Activated CD8-positive, alpha-beta T cell treated with anti-CD3 and anti-CD28 coated beads, Interleukin-2, amount 10 ng/mL, durations not matched to agents 7 days and 5 days (primary cell): ENCODE measurements at regions of chr9 and their contacts with region 1.

Region 1: GRCh38 chr9:99140685-99141314 is 35.9 kb downstream of the TGFBR1 start:
- DNase-seq: peak; percentile 56
- ATAC-seq: peak; percentile 65
- H3K4me3 Mint-ChIP-seq: no peak overlapping the region
- H3K27ac Mint-ChIP-seq: peak overlapping the region; percentile 66
- H3K4me1 Mint-ChIP-seq: peaks cover 50% of the 10 kb centered on the region
- H3K27me3 Mint-ChIP-seq: no peaks in the 10 kb centered on the region

Region 2: DNA sequence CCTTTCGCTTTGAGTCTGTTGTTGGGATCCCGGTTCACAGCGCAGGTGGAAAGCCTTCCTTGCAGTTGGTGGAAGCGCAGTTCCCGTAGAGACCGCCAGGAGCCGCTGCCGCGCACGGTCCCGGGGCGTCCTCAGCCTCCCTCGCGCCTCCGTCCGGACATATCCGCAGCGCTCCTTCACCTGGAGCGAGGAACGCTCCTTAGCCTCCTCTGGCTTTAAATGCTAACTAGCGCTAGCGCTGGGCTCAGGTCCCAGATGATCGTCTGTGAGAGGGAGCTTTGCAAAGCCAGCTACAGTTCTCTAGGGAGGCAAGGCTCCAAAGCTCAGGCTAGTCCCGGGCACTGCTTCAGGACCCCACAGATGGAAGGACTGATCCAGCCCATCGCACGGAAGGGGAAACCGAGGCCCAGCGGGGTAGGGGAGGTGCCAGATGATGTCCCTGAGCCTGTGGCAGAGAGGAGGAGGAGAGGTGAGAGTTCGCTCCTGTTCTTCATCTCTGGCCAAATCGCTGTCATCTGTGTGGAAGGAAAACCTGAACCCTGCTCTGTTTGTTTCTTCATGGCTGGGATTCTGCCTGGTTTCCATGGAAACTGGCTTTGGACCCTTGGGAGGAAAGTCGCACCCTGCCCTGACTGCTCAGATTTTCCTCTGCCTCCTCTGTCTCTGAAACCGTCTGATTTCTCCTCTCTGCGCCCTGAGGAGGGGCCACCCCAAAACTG is 165.6 kb before region 1 on chr9:
- CTCF ChIA-PET with region 1: interaction called, 75 read pairs
- POLR2A ChIA-PET with region 1: no interaction called
- DNase-seq: peak; percentile 87
- ATAC-seq: peak; percentile 96
- H3K4me3 Mint-ChIP-seq: peak overlapping the region; percentile 4
- H3K27ac Mint-ChIP-seq: no peak overlapping the region
- H3K4me1 Mint-ChIP-seq: peaks cover 16% of the 10 kb centered on the region
- H3K27me3 Mint-ChIP-seq: peaks cover 20% of the 10 kb centered on the region

Region 3: GRCh38 chr9:99012942-99013512 is 127.8 kb before region 1 on chr9:
- CTCF ChIA-PET with region 1: interaction called, 66 read pairs
- POLR2A ChIA-PET with region 1: no interaction called
- DNase-seq: peak; percentile 38
- ATAC-seq: peak; percentile 49
- H3K4me3 Mint-ChIP-seq: peak overlapping the region; percentile 63
- H3K27ac Mint-ChIP-seq: peak overlapping the region; percentile 99
- H3K4me1 Mint-ChIP-seq: peaks cover 37% of the 10 kb centered on the region
- H3K27me3 Mint-ChIP-seq: no peaks in the 10 kb centered on the region

Region 4: GRCh38 chr9:99057665-99058625 is 82.9 kb before region 1 on chr9:
- CTCF ChIA-PET with region 1: interaction called, 24 read pairs
- POLR2A ChIA-PET with region 1: interaction called, 4 read pairs
- DNase-seq: peak; percentile 94
- ATAC-seq: peak; percentile 82
- H3K4me3 Mint-ChIP-seq: peak overlapping the region; percentile 78
- H3K27ac Mint-ChIP-seq: peak overlapping the region; percentile 98
- H3K4me1 Mint-ChIP-seq: peaks cover 82% of the 10 kb centered on the region
- H3K27me3 Mint-ChIP-seq: no peaks in the 10 kb centered on the region

Region 5: DNA sequence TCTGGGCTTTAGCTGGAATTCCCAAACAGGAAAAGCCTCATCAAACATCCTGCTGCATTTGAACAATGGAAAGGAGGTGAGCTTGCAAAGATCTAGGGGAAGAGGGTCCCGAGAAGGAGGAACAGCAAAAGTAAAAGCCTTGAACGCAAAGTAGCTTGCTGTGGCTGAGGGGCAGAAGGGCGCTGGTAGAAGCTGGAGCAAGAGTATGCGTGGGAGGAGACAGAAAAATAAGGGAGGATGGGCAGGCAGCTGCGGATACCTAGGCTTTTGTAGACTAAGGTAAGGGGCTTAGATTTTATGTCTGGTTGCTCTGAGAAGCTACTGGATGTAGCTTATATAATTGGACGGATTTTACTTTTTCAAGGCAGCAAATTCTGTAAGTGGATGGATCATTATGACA is 57.7 kb before region 1 on chr9:
- CTCF ChIA-PET with region 1: no interaction called
- POLR2A ChIA-PET with region 1: no interaction called
- DNase-seq: no peak
- ATAC-seq: no peak
- H3K4me3 Mint-ChIP-seq: no peak overlapping the region
- H3K27ac Mint-ChIP-seq: no peak overlapping the region
- H3K4me1 Mint-ChIP-seq: peaks cover 31% of the 10 kb centered on the region
- H3K27me3 Mint-ChIP-seq: no peaks in the 10 kb centered on the region

Region 6: GRCh38 chr9:99118782-99119466 is 21.9 kb before region 1 on chr9:
- CTCF ChIA-PET with region 1: interaction called, 30 read pairs
- POLR2A ChIA-PET with region 1: interaction called, 5 read pairs
- DNase-seq: peak; percentile 80
- ATAC-seq: peak; percentile 99
- H3K4me3 Mint-ChIP-seq: peak overlapping the region; percentile 72
- H3K27ac Mint-ChIP-seq: peak overlapping the region; percentile 93
- H3K4me1 Mint-ChIP-seq: peaks cover 87% of the 10 kb centered on the region
- H3K27me3 Mint-ChIP-seq: no peaks in the 10 kb centered on the region